ENCODE measurements at regions of chr16 and their contacts with region 1.

Region 1: GRCh38 chr16:88856828-88857733 is at the starts of genes GALNS and TRAPPC2L:
- DNase-seq: peak; percentile 100
- ATAC-seq: peak; percentile 93
- H3K4me3 Mint-ChIP-seq: peak within 1 kb of the TSS; percentile 100
- H3K27ac Mint-ChIP-seq: peak within 1 kb of the TSS; percentile 97
- H3K4me1 Mint-ChIP-seq: peaks cover 22% of the 10 kb centered on the region
- H3K27me3 Mint-ChIP-seq: no peaks in the 10 kb centered on the region
- total RNA-seq, gene GALNS: 20.1 TPM
- total RNA-seq, gene TRAPPC2L: 43.3 to 50.7 TPM

Region 2: DNA sequence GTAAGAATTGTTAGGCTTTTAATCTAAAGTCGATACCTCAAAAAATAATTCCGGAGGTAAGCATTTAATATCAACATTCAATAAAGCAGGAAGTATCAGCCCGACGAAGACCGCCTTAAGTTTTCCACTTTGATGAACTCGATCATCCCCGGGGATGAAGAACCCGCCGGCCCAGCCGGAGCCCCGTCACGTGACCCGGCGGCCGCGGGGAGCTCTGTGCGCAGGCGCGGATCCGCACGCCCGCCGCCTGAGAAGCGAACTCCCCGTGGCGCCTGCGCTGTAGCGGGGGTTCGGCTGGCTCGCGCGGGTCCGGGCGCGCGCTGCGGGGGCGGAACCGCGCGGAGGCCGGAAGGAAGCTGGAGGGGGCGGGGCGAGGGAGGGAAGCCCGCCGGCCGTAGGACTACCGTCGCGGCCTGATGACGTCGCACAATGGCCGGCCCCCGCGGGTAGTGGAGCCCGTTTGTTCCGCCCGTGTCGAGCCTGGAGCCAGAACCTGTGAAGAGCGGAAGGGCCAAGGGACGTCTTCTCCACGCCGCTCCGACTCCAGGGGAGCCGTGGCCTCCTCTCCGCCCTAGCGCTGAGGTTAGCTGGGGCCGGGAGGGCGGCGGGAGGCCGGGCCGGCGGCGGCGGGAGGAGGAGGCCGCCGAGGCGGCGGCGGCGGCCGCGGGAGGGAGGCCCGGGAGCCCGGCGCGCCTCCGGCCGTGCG is 286.9 kb before region 1 on chr16 and contains the start of gene ZC3H18:
- CTCF ChIA-PET with region 1: no interaction called
- POLR2A ChIA-PET with region 1: no interaction called
- intact Hi-C with region 1: loop called in 1 of 2 experiments (anchors 1 kb)
- DNase-seq: peak; percentile 99
- ATAC-seq: peak; percentile 83
- H3K4me3 Mint-ChIP-seq: peak within 1 kb of the TSS; percentile 88
- H3K27ac Mint-ChIP-seq: peak within 1 kb of the TSS; percentile 79
- H3K4me1 Mint-ChIP-seq: peaks cover 44% of the 10 kb centered on the region
- H3K27me3 Mint-ChIP-seq: no peaks in the 10 kb centered on the region
- total RNA-seq, gene ZC3H18: 70.0 to 76.4 TPM

Region 3: GRCh38 chr16:88706288-88706964 is 150.7 kb before region 1 on chr16 and contains the starts of genes CTU2 and RNF166:
- CTCF ChIA-PET with region 1: no interaction called
- POLR2A ChIA-PET with region 1: no interaction called
- intact Hi-C with region 1: loop called in 1 of 2 experiments (anchors 1 kb)
- DNase-seq: peak; percentile 96
- ATAC-seq: peak; percentile 59
- H3K4me3 Mint-ChIP-seq: peak within 1 kb of the TSS; percentile 92
- H3K27ac Mint-ChIP-seq: peak within 1 kb of the TSS; percentile 92
- H3K4me1 Mint-ChIP-seq: peaks cover 43% of the 10 kb centered on the region
- H3K27me3 Mint-ChIP-seq: no peaks in the 10 kb centered on the region
- total RNA-seq, gene CTU2: 29.6 to 36.2 TPM
- total RNA-seq, gene RNF166: 44.0 to 49.7 TPM

Region 4: DNA sequence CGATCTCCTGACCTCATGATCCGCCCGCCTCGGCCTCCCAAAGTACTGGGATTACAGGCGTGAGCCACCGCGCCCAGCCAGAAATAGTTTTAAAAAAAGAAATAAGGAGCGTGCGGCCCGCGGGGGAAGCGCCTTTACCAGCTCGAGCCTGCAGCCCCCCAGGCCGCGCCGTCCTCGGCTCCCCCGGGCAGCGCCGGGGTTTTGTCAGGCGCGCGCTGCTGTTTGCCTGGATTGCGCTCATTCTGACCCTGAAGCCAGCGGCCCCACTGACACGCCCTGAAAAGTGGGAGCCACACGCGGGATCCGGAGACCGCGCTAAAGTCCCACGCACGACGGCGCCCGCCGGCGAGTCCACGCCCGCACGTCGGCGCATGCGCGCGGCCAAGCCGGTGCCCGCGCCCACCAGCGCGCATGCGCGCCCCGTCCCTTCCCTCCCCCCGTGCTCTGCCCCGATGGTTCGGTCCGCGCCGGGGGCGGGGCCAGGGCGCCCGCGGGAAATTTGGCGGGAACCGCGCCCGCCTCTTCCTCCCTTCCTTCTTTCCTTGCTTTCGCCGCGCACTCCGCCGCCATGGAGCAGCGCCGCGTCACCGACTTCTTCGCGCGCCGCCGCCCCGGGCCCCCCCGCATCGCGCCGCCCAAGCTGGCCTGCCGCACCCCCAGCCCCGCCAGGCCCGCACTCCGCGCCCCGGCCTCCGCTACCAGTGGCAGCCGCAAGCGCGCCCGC is 53.7 kb before region 1 on chr16 and contains the start of gene CDT1:
- CTCF ChIA-PET with region 1: interaction called, 3 read pairs
- POLR2A ChIA-PET with region 1: no interaction called
- intact Hi-C with region 1: loop called in 1 of 2 experiments (anchors 2 kb)
- DNase-seq: peak; percentile 90
- ATAC-seq: peak; percentile 32
- H3K4me3 Mint-ChIP-seq: peak within 1 kb of the TSS; percentile 83
- H3K27ac Mint-ChIP-seq: peak within 1 kb of the TSS; percentile 94
- H3K4me1 Mint-ChIP-seq: peaks cover 24% of the 10 kb centered on the region
- H3K27me3 Mint-ChIP-seq: no peaks in the 10 kb centered on the region
- total RNA-seq, gene CDT1: 136 to 182 TPM

Region 5: DNA sequence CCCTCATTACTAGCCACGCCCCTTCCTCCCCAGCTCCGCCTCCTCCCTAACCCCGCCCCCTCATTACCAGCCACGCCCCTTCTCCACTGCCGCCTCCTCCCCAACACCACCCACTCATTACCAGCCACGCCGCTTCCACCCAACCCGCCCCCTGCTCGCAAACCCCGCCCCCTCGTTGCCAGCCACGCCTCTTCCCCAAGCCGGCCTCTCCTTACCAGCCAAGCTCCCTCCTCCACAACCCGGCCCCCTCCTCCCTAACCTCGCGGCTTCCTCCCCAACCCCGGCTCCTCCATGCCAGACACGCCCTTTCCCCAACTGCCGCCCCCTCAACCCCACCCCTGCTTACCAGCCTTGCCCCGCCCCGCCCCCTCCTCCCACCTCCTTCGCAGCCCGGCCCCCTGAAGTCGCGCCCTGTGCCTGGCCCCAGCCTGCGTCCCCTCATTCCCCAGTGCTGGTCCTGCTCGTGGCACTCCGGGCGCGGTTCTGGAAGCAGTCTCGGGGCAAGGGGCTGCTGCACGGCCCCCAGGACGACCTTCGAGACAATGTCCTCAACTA is 336.0 kb after region 1 on chr16:
- CTCF ChIA-PET with region 1: interaction called, 4 read pairs
- POLR2A ChIA-PET with region 1: interaction called, 3 read pairs
- intact Hi-C with region 1: loop called in 1 of 2 experiments (anchors 1 kb)
- DNase-seq: no peak
- ATAC-seq: peak; percentile 78
- H3K4me3 Mint-ChIP-seq: no peak overlapping the region
- H3K27ac Mint-ChIP-seq: no peak overlapping the region
- H3K4me1 Mint-ChIP-seq: no peaks in the 10 kb centered on the region
- H3K27me3 Mint-ChIP-seq: no peaks in the 10 kb centered on the region

Region 6: DNA sequence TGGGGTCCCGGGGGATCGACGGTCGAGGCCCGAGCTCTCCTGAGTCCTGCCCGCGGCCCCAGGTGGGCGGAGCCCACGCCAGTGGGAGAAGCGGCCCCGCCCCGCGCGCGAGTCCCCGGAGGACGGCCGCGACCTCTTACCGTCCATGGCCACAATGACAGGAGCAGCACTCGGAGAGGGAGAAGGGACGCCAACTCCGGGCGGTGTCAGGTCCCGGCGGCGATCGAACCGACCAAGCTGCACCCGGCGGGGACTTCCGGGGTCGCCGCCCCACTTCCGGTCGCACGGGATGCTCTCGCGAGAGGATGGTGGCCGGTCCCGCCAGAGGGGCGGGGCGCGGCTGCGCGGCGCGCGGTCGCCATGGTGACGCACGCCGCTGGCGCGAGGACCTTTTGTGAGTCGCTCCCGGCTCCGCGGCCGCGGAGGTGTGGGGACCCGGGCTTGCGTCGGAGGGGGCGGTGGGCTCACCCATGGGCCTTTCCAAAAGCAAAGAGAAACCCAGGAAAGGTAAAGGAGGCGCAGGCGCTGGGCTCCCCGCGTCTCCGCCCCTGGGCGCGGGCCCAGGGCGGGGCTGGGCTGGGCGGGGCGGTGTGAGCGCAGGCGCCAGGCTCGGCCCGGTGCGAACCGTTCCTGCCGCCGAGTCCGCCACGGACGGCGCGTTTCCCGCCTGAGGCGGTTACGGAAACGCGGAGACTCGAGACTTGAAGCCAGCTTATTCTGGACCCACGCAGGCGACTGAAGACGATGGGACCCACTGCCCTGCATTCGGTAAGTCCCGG is 800.5 kb after region 1 on chr16 and contains the starts of genes CHMP1A and SPATA33:
- CTCF ChIA-PET with region 1: no interaction called
- POLR2A ChIA-PET with region 1: no interaction called
- intact Hi-C with region 1: loop called in 1 of 2 experiments (anchors 1 kb)
- DNase-seq: peak; percentile 96
- ATAC-seq: peak; percentile 93
- H3K4me3 Mint-ChIP-seq: peak within 1 kb of the TSS; percentile 90
- H3K27ac Mint-ChIP-seq: peak within 1 kb of the TSS; percentile 83
- H3K4me1 Mint-ChIP-seq: peaks cover 28% of the 10 kb centered on the region
- H3K27me3 Mint-ChIP-seq: no peaks in the 10 kb centered on the region
- total RNA-seq, gene CHMP1A: 37.9 to 67.3 TPM
- total RNA-seq, gene SPATA33: 6.8 to 11.6 TPM

Measured in activated CD4-positive, alpha-beta T cell treated with anti-CD3 and anti-CD28 coated beads for 36 hours (primary cell).